CD4-positive, alpha-beta T cell (primary cell): ENCODE measurements at regions of chr10 and their contacts with region 1.

Region 1: DNA sequence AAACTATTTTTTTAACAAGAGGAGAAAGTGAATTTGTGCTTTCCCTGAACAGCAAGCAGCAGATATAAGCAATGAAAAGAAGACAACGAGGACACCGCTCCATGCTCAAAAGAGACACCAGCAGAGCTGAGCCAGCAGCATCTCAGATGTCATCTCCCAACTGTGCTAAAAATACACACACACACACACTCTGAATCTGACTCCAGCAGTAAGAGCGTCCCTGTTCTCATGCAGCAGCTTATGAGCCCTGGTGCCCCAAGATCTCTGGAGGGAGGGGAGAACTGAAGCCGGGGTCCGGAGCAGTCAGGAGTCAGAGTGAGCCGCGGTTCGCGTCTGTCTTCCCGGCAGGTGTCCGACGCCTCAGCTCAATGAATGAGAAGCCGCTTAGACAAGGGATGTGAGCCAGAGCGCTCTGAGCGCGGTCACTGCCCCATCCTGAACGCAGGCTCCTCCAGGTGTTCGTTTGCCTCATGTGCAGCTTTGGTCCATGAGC is 49.2 kb downstream of the SVIL start:
- DNase-seq: no peak
- ATAC-seq: no peak
- H3K4me3 ChIP-seq: no peak overlapping the region
- H3K4me3 Mint-ChIP-seq: no peak overlapping the region
- H3K27ac ChIP-seq: no peak overlapping the region
- H3K27ac Mint-ChIP-seq: no peak overlapping the region
- H3K4me1 ChIP-seq: peaks cover 16% of the 10 kb centered on the region
- H3K4me1 Mint-ChIP-seq: peaks cover 18% of the 10 kb centered on the region
- H3K27me3 ChIP-seq: no peaks in the 10 kb centered on the region
- H3K27me3 Mint-ChIP-seq: no peaks in the 10 kb centered on the region
- CTCF ChIP-seq: no peak

Region 2: GRCh38 chr10:29702273-29703164 is 117.0 kb after region 1 on chr10:
- CTCF ChIA-PET with region 1: no interaction called
- POLR2A ChIA-PET with region 1: no interaction called
- intact Hi-C with region 1: no loop called
- DNase-seq: peak in 2 of 14 experiments; percentile 28 to 32
- ATAC-seq: peak; percentile 64
- H3K4me3 ChIP-seq: peak overlapping the region; percentile 19
- H3K4me3 Mint-ChIP-seq: peak overlapping the region; percentile 59
- H3K27ac ChIP-seq: peak overlapping the region; percentile 23 to 52
- H3K27ac Mint-ChIP-seq: peak overlapping the region; percentile 87
- H3K4me1 ChIP-seq: peaks cover 26% of the 10 kb centered on the region
- H3K4me1 Mint-ChIP-seq: peaks cover 57% of the 10 kb centered on the region
- H3K27me3 ChIP-seq: no peaks in the 10 kb centered on the region
- H3K27me3 Mint-ChIP-seq: no peaks in the 10 kb centered on the region
- CTCF ChIP-seq: no peak

Region 3: DNA sequence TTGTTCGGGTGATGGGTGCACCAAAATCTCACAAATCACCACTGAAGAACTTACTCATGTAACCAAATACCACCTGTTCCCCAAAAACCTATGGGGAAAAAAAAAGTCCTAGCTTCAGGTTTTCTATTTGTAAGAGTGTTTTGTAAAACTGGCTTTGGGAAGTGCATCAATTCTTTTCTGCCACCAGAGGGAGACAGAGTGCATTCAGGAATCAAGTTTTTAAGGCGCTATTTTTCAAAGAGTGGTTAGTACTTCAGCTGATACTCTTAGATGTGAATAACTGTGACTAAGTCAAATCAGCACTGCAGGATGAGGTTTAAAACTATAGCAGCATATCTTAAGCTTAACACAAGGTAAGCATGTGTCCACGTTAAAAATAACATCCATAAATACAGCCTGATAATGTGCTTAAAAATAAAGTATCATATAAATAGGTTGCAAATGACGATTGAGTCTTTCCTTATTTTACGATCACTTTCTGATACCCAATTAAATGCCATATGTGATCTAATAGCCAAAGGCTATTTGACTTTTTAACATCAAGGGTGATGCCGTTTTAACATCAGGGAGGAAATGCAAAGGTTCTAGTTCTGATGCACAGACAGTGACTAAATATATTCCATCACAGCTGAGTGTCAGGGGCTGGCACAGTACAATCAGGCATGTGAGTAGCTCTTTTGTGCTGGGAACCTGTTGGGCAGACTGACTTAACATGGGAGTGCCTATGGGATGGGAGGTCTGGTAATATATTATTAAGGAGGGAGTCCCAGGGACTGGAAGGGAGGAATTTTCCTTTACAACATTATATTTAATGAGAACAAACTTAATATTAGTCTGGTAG is 1054.6 kb after region 1 on chr10:
- CTCF ChIA-PET with region 1: no interaction called
- POLR2A ChIA-PET with region 1: no interaction called
- intact Hi-C with region 1: loop called in 1 of 2 experiments (anchors 5 kb)
- DNase-seq: peak in 4 of 14 experiments; percentile 21 to 75 (median 53)
- ATAC-seq: peak; percentile 69
- H3K4me3 ChIP-seq: no peak overlapping the region
- H3K4me3 Mint-ChIP-seq: no peak overlapping the region
- H3K27ac ChIP-seq: no peak overlapping the region
- H3K27ac Mint-ChIP-seq: no peak overlapping the region
- H3K4me1 ChIP-seq: no peaks in the 10 kb centered on the region
- H3K4me1 Mint-ChIP-seq: no peaks in the 10 kb centered on the region
- H3K27me3 ChIP-seq: peaks cover 2 to 9% of the 10 kb centered on the region in 2 experiments
- H3K27me3 Mint-ChIP-seq: peaks cover 52% of the 10 kb centered on the region
- CTCF ChIP-seq: peak; percentile 91